ENCODE measurements at regions of chr12 and their contacts with region 1.

Region 1: GRCh38 chr12:53543539-53543938 is 36.3 kb upstream of the NPFF start:
- DNase-seq: peak; percentile 78
- H3K4me3 ChIP-seq: no peak overlapping the region
- H3K27ac ChIP-seq: peak overlapping the region; percentile 43
- H3K4me1 ChIP-seq: peaks cover 8% of the 10 kb centered on the region
- H3K27me3 ChIP-seq: no peaks in the 10 kb centered on the region
- CTCF ChIP-seq: peak; percentile 79 to 91
- POLR2A ChIP-seq: no peak

Region 2: DNA sequence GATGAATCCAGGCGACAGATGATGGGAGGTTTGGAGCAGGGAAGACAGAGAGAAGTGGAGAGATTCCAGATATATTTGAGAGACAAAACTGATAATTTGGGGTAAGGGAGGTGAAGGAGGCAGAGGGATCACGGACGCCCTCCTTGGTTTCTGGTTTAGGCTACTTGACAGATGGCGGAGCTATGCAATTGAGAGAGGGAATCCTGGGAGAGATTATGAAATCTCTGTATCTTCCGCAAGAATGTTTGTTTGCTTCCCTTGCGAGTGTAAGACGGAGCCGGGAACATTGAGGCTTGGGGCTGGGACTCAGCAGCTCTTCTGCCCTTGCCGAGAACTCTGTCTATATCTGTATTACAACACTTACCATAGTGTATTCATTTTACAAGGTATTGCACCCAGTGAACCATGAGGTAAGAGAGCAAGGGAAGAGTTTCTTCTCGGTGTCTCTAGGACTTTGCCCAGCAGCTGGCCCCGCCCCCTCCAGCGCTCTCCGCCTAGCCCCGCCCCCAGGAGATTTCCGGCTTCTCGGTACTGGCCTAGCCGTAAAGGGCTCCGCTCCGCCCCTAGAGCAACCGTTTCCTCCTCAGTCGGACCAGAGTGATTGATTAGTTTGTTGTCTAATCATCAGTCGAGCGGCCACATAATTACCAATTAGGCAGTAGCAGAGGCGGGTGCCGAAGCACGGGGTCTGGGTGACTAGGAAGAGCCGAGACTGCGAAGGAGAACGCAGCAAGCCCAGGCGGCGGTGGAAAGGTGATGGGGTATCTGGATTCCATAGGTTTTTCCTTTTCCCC is 102.3 kb before region 1 on chr12 and contains the start of gene PRR13:
- CTCF ChIA-PET with region 1: no interaction called
- POLR2A ChIA-PET with region 1: no interaction called
- dilution Hi-C with region 1: no loop called
- intact Hi-C with region 1: no loop called
- DNase-seq: peak; percentile 99
- H3K4me3 ChIP-seq: peak within 1 kb of the TSS; percentile 65 to 99 (median 96)
- H3K27ac ChIP-seq: peak within 1 kb of the TSS; percentile 65
- H3K4me1 ChIP-seq: peaks cover 12% of the 10 kb centered on the region
- H3K27me3 ChIP-seq: no peaks in the 10 kb centered on the region
- CTCF ChIP-seq: no peak
- POLR2A ChIP-seq: peak; percentile 94
- total RNA-seq, gene PRR13: 123 and 139 TPM in 2 replicates

Region 3: DNA sequence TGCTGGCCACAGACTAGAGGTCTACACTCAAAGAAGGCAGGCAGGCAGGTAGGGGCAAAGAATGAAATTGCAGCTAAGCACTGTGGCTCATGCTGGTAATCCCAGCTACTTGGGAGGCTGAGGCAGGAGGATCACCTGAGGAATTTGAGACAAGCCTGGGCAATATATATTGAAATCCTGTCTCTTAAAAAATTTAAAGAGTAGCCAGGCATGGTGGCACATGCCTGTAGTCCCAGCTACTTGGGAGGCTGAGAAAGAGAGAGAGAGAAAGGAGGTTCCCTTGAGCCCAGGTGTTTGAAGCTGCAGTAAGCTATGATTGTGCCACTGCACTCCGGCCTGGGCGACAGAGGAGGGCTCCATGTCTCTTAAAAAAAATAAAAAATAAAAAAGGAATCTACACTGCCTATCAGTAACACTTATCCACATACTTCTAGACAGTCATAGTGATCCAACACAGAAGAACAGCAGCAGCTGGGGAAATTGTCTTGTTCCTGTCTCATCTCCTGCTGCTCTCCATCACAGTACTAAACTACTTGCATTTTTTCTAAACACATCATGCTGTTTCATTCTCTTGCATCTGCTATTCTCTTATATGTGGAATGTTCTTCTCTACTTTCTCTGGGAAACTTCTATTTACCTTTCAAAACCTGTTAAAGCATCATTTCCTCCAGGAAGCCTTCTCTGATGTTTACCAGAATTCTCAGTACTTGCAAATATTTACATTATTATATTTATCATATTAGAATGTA is 25.4 kb after region 1 on chr12:
- CTCF ChIA-PET with region 1: interaction called, 10 read pairs
- POLR2A ChIA-PET with region 1: no interaction called
- dilution Hi-C with region 1: no loop called
- intact Hi-C with region 1: no loop called
- DNase-seq: no peak
- H3K4me3 ChIP-seq: no peak overlapping the region
- H3K27ac ChIP-seq: no peak overlapping the region
- H3K4me1 ChIP-seq: no peaks in the 10 kb centered on the region
- H3K27me3 ChIP-seq: no peaks in the 10 kb centered on the region
- CTCF ChIP-seq: no peak
- POLR2A ChIP-seq: no peak

Region 4: DNA sequence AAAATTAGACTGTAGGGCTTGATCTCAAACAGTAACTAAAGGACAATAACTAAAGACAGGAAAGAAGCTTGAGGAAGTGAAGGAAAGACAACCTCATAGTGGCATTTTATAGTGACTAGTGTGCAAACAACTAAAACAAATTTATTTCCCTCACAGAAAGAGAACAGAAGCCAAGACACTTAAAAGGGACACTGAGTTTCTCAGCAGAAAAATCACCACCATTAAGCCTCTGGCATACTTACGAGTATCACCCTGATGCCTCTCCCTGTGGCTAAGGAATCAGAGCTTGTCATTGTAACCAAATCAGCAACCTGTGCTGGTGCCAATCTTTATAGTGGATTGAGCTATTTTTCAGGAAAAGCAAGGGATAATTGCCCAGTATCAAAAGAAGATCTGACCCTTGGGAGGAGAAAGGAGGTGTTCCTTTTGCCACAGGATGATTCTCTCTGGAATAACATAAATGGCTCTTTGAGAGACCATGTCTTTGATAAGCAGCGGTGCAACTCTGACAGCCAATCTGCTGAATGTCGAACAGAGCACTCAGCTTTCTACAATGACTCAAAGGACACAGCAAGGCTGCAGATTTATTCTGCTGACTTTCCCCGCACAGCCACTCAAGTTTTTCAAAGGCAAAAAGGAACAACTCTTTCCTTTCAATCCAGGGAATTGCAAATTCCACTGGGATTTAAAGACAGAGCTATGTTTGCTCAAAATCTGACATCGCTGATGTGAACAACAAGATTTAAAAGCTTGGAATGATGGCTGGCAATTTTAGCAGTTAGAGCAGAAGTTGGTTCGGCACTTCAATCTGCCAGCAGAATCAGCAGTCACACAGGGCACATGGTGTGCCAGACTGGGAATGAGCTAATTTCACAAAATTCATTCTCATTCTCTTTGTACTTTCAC is 48.0 kb after region 1 on chr12:
- CTCF ChIA-PET with region 1: interaction called, 28 read pairs
- POLR2A ChIA-PET with region 1: no interaction called
- dilution Hi-C with region 1: no loop called
- intact Hi-C with region 1: loop called (anchors 2 kb)
- DNase-seq: peak; percentile 42
- H3K4me3 ChIP-seq: no peak overlapping the region
- H3K27ac ChIP-seq: no peak overlapping the region
- H3K4me1 ChIP-seq: peaks cover 47% of the 10 kb centered on the region
- H3K27me3 ChIP-seq: no peaks in the 10 kb centered on the region
- CTCF ChIP-seq: no peak
- POLR2A ChIP-seq: no peak

Region 5: GRCh38 chr12:53618275-53618674 is 74.7 kb after region 1 on chr12:
- CTCF ChIA-PET with region 1: interaction called, 26 read pairs
- POLR2A ChIA-PET with region 1: interaction called, 6 read pairs
- dilution Hi-C with region 1: no loop called
- intact Hi-C with region 1: no loop called
- DNase-seq: no peak
- H3K4me3 ChIP-seq: peak overlapping the region in 2 of 3 experiments; percentile 49 to 67
- H3K27ac ChIP-seq: peak overlapping the region; percentile 76
- H3K4me1 ChIP-seq: peaks cover 36% of the 10 kb centered on the region
- H3K27me3 ChIP-seq: no peaks in the 10 kb centered on the region
- CTCF ChIP-seq: no peak
- POLR2A ChIP-seq: no peak

Region 6: DNA sequence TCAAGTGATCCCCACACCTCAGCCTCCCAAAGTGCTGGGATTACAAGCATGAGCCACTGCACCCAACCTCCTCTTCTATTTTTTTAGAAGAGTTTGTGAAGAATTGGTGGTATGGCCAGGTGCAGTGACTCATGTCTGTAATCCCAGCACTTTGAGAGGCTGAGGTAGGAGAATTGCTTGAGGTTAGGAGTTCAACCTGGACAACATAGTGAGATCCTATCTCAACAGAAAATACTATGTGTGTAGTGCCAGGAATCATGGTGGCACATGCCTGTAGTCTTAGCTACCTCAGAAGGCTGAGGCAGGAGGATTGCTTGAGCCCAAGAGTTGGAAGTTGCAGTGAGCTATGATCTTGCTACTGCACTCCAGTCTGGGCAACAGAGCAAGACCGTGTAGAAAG is 88.2 kb after region 1 on chr12:
- CTCF ChIA-PET with region 1: interaction called, 13 read pairs
- POLR2A ChIA-PET with region 1: no interaction called
- dilution Hi-C with region 1: no loop called
- intact Hi-C with region 1: loop called (anchors 2 kb)
- DNase-seq: no peak
- H3K4me3 ChIP-seq: no peak overlapping the region
- H3K27ac ChIP-seq: no peak overlapping the region
- H3K4me1 ChIP-seq: peaks cover 2% of the 10 kb centered on the region
- H3K27me3 ChIP-seq: peaks cover 0 to 2% of the 10 kb centered on the region in 2 experiments
- CTCF ChIP-seq: no peak
- POLR2A ChIP-seq: no peak

Region 7: GRCh38 chr12:53664936-53665335 is 121.4 kb after region 1 on chr12:
- CTCF ChIA-PET with region 1: interaction called, 26 read pairs
- POLR2A ChIA-PET with region 1: no interaction called
- dilution Hi-C with region 1: no loop called
- intact Hi-C with region 1: no loop called
- DNase-seq: no peak
- H3K4me3 ChIP-seq: no peak overlapping the region
- H3K27ac ChIP-seq: no peak overlapping the region
- H3K4me1 ChIP-seq: no peaks in the 10 kb centered on the region
- H3K27me3 ChIP-seq: no peaks in the 10 kb centered on the region
- CTCF ChIP-seq: no peak
- POLR2A ChIP-seq: no peak